ENCODE measurements at regions of chr10 and their contacts with region 1.

Region 1: GRCh38 chr10:101830322-101831168 is 12.3 kb upstream of the OGA start:
- DNase-seq: peak; percentile 95 to 98 (median 97)
- H3K4me3 ChIP-seq: peak overlapping the region; percentile 57 to 68
- H3K4me3 Mint-ChIP-seq: peak overlapping the region; percentile 84 to 93 (median 88)
- H3K27ac ChIP-seq: peak overlapping the region; percentile 87
- H3K27ac Mint-ChIP-seq: peak overlapping the region; percentile 98 to 100 (median 99)
- H3K4me1 ChIP-seq: peaks cover 59% of the 10 kb centered on the region
- H3K4me1 Mint-ChIP-seq: peaks cover 44 to 80% (median 57%) of the 10 kb centered on the region in 4 donors
- H3K27me3 ChIP-seq: no peaks in the 10 kb centered on the region
- H3K27me3 Mint-ChIP-seq: peaks cover 2 to 7% of the 10 kb centered on the region in 2 donors

Region 2: DNA sequence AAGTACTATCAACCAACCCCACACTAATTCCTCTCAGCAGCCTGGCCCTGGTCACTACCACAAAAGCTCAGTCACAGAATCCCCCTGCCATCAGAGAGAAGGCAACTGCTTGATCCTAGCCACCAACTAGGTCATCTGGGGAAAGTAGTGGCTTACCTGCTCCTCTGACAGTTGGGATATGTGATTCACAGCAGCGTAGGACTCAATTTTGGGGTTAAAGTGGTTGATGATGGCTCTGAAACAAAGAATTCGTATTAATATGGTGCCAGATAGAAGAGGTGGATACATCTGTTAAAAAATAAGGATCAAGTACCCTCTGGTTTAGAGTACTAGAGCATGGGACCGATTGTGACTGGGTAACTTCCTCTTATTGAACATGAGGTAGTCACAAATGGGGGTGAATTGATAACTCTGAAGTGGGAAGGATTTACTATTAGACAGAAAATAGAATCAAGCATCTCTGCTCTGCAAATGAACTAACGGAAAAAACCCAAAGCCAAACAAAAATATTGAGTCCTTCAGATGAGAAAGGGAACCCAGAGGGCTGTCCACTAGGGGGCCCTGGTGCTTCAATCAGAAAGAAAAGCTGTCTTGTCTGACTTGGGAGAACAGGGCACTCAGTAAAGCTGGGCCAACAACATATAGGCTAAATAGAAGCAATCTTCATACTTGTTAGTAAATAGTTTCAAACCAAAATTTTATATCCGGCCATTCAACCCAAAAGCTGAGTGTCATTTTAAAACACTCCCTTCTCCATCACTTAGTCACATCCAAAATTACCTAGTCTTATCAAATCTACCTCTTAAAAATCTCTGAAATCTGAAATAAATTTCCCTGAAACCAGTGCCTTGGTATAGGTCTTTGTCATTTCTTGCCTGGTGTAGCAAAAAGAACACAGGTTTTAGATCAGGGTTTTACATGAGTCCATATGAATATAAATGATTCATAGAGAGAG is 59.0 kb after region 1 on chr10:
- CTCF ChIA-PET with region 1: no interaction called
- POLR2A ChIA-PET with region 1: no interaction called
- intact Hi-C with region 1: no loop called
- DNase-seq: peak; percentile 42 to 61 (median 52)
- H3K4me3 ChIP-seq: no peak overlapping the region
- H3K4me3 Mint-ChIP-seq: no peak overlapping the region
- H3K27ac ChIP-seq: no peak overlapping the region
- H3K27ac Mint-ChIP-seq: peak overlapping the region in 3 of 7 donors; percentile 3 to 5 (median 3)
- H3K4me1 ChIP-seq: no peaks in the 10 kb centered on the region
- H3K4me1 Mint-ChIP-seq: peaks cover 0 to 4% (median under 1%) of the 10 kb centered on the region in 4 donors
- H3K27me3 ChIP-seq: no peaks in the 10 kb centered on the region
- H3K27me3 Mint-ChIP-seq: no peaks in the 10 kb centered on the region

Region 3: DNA sequence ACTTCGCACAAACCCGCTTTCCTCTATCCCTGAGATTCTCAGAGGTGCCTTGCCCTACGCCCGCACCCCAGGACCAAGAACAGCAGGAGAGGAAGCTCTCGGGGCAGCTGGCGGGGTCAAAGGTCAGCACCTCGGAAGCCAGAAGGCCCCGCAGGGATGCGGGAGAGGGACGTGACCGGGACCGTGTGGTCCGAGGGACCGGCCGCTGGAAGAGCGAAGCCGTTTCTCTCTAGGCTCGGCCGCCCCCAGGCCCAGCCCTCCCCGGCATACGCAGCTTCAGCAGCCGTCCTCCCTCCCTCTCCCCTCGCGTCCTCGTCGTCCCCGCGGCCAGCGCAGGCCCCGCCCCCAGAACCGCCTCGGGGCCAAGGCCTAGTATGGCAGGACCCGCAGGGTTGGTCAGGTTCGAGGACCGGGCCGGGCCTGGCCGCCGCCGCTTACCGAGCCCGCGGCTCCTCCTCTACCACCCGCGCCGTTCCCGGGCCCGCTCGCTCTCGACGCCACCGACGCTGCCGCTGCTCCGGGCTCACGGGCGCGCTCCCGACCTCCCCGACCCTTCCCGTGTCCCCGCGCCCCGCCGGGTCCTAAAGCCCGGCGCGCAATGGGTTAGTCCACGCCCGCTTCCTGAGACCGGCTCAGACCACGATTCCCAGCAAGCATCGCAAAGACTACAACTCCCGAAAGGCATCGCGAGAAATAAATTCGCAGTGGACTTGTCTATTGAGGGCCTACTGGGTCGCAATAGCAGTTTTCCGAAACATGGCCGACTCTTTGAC is 225.3 kb after region 1 on chr10 and contains the start of gene ARMH3:
- CTCF ChIA-PET with region 1: no interaction called
- POLR2A ChIA-PET with region 1: no interaction called
- intact Hi-C with region 1: loop called (anchors 5 kb)
- DNase-seq: peak; percentile 89 to 92 (median 90)
- H3K4me3 ChIP-seq: peak within 1 kb of the TSS; percentile 89 to 99
- H3K4me3 Mint-ChIP-seq: peak within 1 kb of the TSS; percentile 95 to 98 (median 96)
- H3K27ac ChIP-seq: peak within 1 kb of the TSS; percentile 88
- H3K27ac Mint-ChIP-seq: peak within 1 kb of the TSS; percentile 94 to 99 (median 97)
- H3K4me1 ChIP-seq: peaks cover 51% of the 10 kb centered on the region
- H3K4me1 Mint-ChIP-seq: peaks cover 31 to 54% (median 42%) of the 10 kb centered on the region in 4 donors
- H3K27me3 ChIP-seq: no peaks in the 10 kb centered on the region
- H3K27me3 Mint-ChIP-seq: no peaks in the 10 kb centered on the region
- total RNA-seq, gene ARMH3: 31.4 to 31.8 TPM